GM13977 (cell line): ENCODE measurements at regions of chr12 and their contacts with region 1.

Region 1: DNA sequence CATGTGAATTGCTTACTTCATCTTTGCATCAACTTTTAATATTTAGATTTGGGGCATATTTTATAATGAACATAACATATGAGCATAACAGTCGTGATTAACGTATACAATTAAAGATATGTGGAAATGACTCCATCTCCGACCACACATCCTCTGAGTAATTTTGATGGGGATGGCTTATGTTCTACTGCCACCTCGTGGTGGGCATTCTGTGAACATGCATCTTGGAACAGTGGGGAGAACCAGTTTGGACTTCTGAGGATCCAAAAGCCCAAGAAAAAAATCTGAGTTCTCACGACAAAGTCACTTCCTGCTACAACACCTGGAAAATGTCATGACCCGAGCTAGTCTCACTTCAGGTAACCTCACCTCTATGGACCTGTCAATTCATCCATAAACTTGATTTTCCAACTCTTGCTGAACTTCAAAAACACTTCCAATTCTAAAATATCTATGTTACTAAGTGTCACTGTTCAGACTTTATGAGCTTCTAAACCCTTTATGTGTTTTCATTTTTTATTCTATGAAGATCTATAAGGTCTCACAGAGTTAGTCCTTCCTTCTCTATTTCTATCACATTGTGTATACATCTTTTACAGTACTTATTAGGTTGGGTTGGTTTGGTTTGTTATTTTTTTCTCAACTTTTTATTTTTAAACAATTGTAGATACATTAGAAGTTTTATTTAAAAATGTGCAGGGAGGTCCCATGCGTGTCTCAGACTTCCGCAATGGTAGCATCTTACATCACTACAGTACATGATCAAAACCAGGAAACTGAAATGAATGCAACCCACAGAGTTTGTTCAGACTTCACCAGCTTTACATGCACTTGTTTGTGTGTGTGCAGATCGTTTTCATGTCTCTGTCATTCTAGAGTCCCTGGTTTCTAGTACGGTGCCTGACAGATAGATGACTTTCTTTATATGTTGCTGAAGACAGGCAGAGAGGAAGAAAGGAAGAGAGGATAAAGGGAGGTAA is 38.2 kb upstream of the STAB2 start:
- DNase-seq: peak; percentile 43
- CTCF ChIP-seq: peak; percentile 78

Region 2: DNA sequence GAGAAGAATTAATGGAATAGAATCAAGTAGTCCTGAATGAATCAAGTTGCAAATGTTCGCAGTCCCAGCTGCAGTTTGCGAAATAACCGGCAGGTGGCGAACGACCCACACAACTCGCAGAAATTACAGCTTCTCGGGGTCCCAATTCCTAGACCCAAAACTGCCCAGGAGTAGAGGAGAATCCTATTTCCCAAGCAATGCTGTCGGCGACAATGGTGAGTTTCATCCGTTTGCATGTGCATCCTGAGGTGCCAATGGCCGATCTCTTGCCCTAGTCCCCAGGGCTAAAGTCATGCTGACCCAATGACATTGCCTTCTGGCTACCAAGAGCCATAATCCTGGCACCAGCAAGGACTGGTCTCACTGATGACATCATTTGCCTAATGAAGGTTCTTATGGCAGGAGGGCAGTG is 600.0 kb before region 1 on chr12:
- in situ Hi-C with region 1: loop called (anchors 10 kb)
- DNase-seq: no peak
- CTCF ChIP-seq: peak; percentile 92